ENCODE measurements at regions of chr5 and their contacts with region 1.

Region 1: DNA sequence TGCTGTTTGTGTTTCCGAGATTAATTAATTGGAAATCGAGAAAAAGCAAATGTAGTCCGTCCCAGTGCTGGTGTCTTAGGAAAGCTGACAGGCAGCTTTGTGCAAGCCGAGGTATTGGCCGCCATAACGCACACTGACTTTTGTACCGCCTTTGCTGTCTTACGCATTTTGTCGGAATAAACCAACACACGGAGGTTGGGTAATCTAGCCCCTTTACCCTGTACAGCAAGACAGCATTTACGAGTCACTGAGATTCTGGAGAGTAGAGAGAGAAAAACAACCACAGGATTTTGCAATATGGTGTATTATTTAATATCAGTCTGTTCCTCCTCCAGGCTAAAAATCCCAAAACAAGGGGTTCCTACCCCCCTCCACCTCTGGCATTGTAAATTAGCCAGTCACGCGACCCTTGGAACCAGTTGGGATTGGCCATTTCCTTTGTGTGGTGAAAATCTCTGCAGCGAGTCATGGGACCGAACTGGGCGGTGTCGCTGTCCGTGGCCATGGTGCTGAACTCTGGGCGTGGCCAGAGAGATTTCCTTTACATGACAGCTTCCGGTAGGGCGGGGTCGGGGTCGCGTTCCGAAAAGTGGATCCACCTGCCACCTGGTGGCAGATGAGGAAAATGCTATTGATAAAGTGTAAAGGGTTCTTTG is 10.3 kb upstream of the PCDHB1 start:
- DNase-seq: peak; percentile 89 to 96
- ATAC-seq: peak; percentile 90 to 92
- H3K4me3 ChIP-seq: peak overlapping the region; percentile 48
- H3K27ac ChIP-seq: peak overlapping the region; percentile 56 to 72
- H3K4me1 ChIP-seq: peaks cover 8% of the 10 kb centered on the region; the same call in 1 of the 3 replicates
- CTCF ChIP-seq: peak; percentile 87
- EP300 ChIP-seq: no peak
- POLR2A ChIP-seq: peak; percentile 55
- RAD21 ChIP-seq: peak; percentile 92

Region 2: GRCh38 chr5:140806834-140807775 is 233.8 kb before region 1 on chr5 and contains the start of gene PCDHA4:
- CTCF ChIA-PET with region 1: interaction called, 46 read pairs
- POLR2A ChIA-PET with region 1: no interaction called
- DNase-seq: peak; percentile 24 to 74
- ATAC-seq: peak; percentile 97 to 98
- H3K4me3 ChIP-seq: peak within 1 kb of the TSS; percentile 60
- H3K27ac ChIP-seq: peak within 1 kb of the TSS; percentile 66 to 80
- H3K4me1 ChIP-seq: no peaks in the 10 kb centered on the region
- CTCF ChIP-seq: peak; percentile 66
- EP300 ChIP-seq: no peak
- POLR2A ChIP-seq: no peak
- RAD21 ChIP-seq: peak; percentile 67 to 70
- polyA plus RNA-seq, gene PCDHA4: 2.8 and 3.3 TPM in 2 replicates

Region 3: DNA sequence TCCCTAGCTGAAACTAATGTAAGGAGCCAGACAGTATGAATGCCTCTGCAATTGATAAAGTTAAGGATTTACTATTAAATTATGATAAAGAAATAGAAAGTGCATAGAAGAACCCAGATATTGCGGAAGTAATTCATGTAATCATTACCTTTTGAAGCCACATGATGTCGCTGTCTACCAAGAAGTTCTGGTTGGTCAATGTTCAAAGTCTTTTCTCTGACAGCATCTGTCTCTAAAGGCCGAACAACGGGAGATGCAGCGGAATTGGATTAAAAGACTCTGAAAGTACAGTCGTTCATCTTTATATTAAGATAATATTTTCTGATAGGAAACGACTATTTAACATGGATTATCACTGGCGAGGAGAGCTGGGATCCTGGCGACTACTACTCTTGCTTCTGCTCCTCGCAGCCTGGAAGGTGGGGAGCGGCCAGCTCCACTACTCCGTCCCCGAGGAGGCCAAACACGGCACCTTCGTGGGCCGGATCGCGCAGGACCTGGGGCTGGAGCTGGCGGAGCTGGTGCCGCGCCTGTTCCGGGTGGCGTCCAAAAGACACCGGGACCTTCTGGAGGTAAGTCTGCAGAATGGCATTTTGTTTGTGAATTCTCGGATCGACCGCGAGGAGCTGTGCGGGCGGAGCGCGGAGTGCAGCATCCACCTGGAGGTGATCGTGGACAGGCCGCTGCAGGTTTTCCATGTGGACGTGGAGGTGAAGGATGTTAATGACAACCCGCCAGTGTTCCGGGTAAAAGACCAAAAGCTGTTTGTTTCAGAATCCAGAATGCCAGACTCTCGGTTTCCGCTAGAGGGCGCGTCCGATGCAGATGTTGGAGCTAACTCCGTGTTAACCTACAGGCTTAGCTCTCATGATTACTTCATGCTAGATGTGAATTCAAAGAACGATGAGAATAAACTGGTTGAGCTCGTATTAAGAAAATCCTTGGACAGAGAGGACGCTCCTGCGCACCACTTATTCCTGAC is 199.6 kb before region 1 on chr5 and contains the start of gene PCDHA8:
- CTCF ChIA-PET with region 1: interaction called, 18 read pairs
- POLR2A ChIA-PET with region 1: no interaction called
- DNase-seq: peak; percentile 20 to 46
- ATAC-seq: peak; percentile 78 to 82; a peak in 5 of 6 replicates
- H3K4me3 ChIP-seq: peak within 1 kb of the TSS; percentile 42
- H3K27ac ChIP-seq: no peak within 1 kb of the TSS
- H3K4me1 ChIP-seq: no peaks in the 10 kb centered on the region
- CTCF ChIP-seq: peak; percentile 33; the same call in 1 of the 3 replicates
- EP300 ChIP-seq: no peak
- POLR2A ChIP-seq: no peak
- RAD21 ChIP-seq: peak; percentile 50 to 55
- polyA plus RNA-seq, gene PCDHA8: 0.12 and 0.16 TPM in 2 replicates

Region 4: DNA sequence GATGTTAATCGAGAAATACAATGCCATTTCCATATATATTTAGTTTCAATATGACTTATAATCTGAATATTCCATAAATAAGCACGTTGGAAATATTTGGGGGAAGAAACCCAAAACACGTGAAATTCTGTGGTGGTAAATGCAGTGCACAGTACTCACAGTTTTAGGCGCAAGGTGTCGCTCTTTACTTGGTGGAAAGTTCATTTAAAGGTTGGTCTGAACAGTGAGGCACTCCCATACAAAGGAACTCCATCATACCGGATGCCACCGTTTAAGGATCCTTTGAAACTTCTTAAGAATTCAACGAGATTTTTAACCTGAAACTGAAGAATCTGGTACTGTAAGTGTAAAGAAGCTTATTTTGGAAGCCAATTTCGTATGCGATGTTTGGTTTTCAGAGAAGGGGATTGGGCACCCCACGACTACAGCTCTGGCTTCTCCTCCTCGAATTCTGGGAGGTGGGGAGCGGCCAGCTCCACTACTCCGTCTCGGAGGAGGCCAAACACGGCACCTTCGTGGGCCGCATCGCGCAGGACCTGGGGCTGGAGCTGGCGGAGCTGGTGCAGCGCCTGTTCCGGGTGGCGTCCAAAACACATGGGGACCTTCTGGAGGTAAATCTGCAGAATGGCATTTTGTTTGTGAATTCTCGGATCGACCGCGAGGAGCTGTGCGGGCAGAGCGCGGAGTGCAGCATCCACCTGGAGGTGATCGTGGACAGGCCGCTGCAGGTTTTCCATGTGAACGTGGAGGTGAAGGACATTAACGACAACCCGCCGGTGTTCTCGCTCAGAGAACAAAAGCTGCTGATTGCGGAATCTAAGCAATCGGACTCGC is 172.0 kb before region 1 on chr5 and contains the start of gene PCDHA11:
- CTCF ChIA-PET with region 1: interaction called, 59 read pairs
- POLR2A ChIA-PET with region 1: interaction called, 4 read pairs
- DNase-seq: peak; percentile 35 to 55
- ATAC-seq: peak; percentile 78 to 89
- H3K4me3 ChIP-seq: peak within 1 kb of the TSS; percentile 15; the same call in 1 of the 3 replicates
- H3K27ac ChIP-seq: no peak within 1 kb of the TSS
- H3K4me1 ChIP-seq: no peaks in the 10 kb centered on the region
- CTCF ChIP-seq: peak; percentile 22; the same call in 2 of the 3 replicates
- EP300 ChIP-seq: no peak
- POLR2A ChIP-seq: no peak
- RAD21 ChIP-seq: peak; percentile 23 to 48; a peak in 3 of 5 replicates
- polyA plus RNA-seq, gene PCDHA11: 0.20 and 0.27 TPM in 2 replicates

Region 5: DNA sequence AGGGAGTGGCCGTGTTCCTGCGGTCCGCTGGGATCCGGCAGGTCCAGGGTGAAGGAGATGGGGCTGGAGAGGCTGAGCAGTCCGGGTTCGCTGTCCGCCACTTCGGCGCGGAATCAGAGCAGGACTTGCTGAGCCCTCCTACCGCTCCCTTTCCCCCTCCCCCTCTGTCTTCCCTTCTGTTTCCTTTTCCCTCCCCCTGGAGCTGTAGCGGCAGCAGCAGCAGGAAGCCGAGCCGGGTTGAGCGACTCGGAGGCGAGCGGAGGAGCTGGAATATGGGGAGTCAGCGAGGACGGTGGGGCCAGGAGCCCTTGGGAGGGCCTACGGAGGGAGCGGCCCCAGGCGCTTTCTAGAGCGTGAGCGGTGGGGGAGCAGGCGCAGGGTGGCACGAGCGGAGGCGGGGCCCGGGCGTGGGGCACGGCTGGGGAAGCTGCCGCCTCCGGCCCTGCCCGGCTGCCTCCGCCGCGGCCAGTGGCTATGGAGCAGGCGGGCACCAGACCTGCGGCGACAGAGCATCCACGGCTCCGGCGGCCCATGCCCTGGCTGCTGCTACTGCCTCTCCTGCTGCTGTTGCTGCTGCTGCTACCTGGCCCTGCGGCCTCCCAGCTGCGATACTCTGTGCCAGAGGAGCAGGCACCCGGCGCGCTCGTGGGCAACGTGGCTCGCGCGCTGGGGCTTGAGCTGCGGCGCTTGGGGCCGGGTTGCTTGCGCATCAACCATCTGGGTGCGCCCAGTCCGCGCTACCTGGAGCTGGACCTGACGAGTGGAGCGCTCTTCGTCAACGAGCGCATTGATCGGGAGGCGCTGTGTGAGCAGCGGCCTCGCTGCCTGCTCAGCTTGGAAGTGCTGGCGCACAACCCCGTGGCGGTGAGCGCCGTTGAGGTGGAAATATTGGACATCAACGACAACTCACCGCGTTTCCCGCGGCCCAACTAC is 74.3 kb before region 1 on chr5 and contains the start of gene PCDHAC2:
- CTCF ChIA-PET with region 1: interaction called, 18 read pairs
- POLR2A ChIA-PET with region 1: interaction called, 3 read pairs
- DNase-seq: peak; percentile 41 to 68
- ATAC-seq: peak; percentile 86 to 92
- H3K4me3 ChIP-seq: peak within 1 kb of the TSS; percentile 53
- H3K27ac ChIP-seq: peak within 1 kb of the TSS; percentile 76 to 90
- H3K4me1 ChIP-seq: peaks cover 7% of the 10 kb centered on the region; the same call in 1 of the 3 replicates
- CTCF ChIP-seq: no peak
- EP300 ChIP-seq: no peak
- POLR2A ChIP-seq: peak; percentile 28
- RAD21 ChIP-seq: no peak
- polyA plus RNA-seq, gene PCDHAC2: 5.3 and 6.3 TPM in 2 replicates

Region 6: DNA sequence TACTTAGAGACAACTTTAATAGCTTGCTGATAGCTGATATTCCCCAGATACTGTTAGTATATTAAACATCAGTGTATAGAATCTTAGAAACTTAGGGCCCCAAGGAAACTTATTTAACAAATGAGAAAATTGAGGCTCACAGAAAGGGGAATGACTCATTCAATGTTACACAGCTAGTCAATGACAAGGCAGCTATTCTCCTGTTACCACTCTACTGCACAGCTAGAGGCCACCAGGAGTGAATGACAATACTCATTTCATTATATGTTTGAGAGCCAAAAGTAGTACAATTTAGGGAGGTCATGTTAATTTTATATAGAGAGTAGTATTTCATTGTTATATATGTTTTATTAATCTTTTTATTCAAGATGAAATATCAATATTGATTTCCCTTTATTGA is 23.0 kb before region 1 on chr5:
- CTCF ChIA-PET with region 1: interaction called, 17 read pairs
- POLR2A ChIA-PET with region 1: no interaction called
- DNase-seq: no peak
- ATAC-seq: 0 out of 6 replicates have a peak, but pooled peaks of 1 of the 2 experiments have one; percentile 54
- H3K4me3 ChIP-seq: no peak overlapping the region
- H3K27ac ChIP-seq: no peak overlapping the region
- H3K4me1 ChIP-seq: no peaks in the 10 kb centered on the region
- CTCF ChIP-seq: no peak
- EP300 ChIP-seq: no peak
- POLR2A ChIP-seq: no peak
- RAD21 ChIP-seq: no peak